B cell (primary cell): ENCODE measurements at regions of chr5 and their contacts with region 1.

Region 1: DNA sequence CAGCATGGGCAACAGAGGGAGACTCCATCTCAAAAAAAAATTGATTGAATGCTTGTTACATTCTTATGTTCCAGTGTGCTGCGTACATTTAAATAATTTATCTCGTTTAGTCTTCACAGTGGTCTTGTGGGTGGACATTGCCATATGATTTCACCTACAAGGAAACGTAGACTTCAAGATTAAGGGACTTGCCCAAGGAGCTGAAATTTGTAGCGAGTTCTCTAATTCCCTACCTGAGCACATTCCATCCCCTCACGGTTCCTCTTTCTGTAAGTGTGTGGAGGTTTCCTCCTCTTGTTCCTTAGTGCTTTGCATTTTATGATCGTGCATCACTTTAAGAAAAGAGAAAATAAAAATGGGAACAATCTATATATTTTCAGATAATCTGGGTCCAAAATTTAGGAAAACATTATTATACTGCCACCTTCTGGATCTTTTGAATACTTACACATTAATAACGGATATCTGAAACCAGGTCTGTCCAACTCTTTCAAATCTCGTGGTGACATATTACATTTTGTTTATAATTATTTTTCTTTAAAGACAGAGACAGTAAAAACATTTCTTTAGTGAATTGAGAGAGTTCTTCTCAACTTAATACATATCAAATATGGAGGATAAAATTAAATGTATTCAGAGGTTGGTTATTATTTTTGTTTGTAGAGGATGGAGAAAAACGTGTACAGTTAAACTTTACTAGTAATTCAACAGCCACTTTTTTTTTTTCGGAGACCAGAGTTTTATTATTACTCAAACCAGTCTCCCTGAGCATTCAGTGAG is 29.9 kb upstream of the C7 start:
- DNase-seq: peak; percentile 36
- ATAC-seq: peak; percentile 36
- H3K4me3 ChIP-seq: no peak overlapping the region
- H3K4me3 Mint-ChIP-seq: no peak overlapping the region
- H3K27ac ChIP-seq: no peak overlapping the region
- H3K27ac Mint-ChIP-seq: no peak overlapping the region
- H3K4me1 ChIP-seq: no peaks in the 10 kb centered on the region
- H3K4me1 Mint-ChIP-seq: no peaks in the 10 kb centered on the region
- H3K27me3 ChIP-seq: peaks cover 0 to 5% (median 0%) of the 10 kb centered on the region in 4 experiments
- H3K27me3 Mint-ChIP-seq: peaks cover 20% of the 10 kb centered on the region
- CTCF ChIP-seq: peak; percentile 83

Region 2: GRCh38 chr5:39578887-39579497 is 1300.4 kb before region 1 on chr5:
- CTCF ChIA-PET with region 1: interaction called, 6 read pairs
- POLR2A ChIA-PET with region 1: no interaction called
- intact Hi-C with region 1: loop called (anchors 1 kb)
- DNase-seq: peak; percentile 38
- ATAC-seq: no peak
- H3K4me3 ChIP-seq: no peak overlapping the region
- H3K4me3 Mint-ChIP-seq: no peak overlapping the region
- H3K27ac ChIP-seq: no peak overlapping the region
- H3K27ac Mint-ChIP-seq: no peak overlapping the region
- H3K4me1 ChIP-seq: peaks cover 7 to 11% of the 10 kb centered on the region in 2 donors
- H3K4me1 Mint-ChIP-seq: peaks cover 5% of the 10 kb centered on the region
- H3K27me3 ChIP-seq: no peaks in the 10 kb centered on the region
- H3K27me3 Mint-ChIP-seq: peaks cover 14% of the 10 kb centered on the region
- CTCF ChIP-seq: peak; percentile 95

Region 3: DNA sequence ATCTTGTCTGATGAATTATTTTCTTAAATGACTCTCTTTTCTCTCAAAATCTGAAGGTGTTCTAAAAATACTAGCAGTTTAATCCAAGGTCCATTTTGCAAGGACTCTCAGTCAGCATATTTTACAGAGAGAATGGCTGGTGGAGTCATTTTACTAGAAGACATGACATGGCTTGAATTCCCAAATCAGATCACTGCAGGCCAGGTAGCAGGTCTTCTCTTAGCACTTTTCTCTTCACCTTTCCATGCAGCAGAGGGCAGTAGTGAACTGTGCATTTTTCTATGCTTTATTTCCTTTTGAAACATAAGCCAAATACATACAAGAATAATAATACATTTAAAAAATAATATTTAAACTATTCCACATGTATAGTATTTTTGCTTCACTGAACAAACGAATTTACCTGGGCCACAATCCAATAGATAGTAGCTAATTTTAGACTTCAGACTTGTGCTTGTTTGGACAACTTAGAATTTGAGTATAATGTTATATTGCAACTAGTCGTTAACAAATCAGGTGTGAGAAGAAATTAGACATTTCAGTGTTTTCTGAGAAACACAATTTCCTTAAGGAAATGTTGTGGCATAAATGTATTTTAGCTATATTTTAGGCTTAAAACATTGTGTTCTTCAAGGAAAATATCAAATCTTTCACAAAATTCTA is 1165.2 kb before region 1 on chr5:
- CTCF ChIA-PET with region 1: interaction called, 13 read pairs
- POLR2A ChIA-PET with region 1: no interaction called
- intact Hi-C with region 1: no loop called
- DNase-seq: peak; percentile 55
- ATAC-seq: no peak
- H3K4me3 ChIP-seq: no peak overlapping the region
- H3K4me3 Mint-ChIP-seq: no peak overlapping the region
- H3K27ac ChIP-seq: no peak overlapping the region
- H3K27ac Mint-ChIP-seq: no peak overlapping the region
- H3K4me1 ChIP-seq: no peaks in the 10 kb centered on the region
- H3K4me1 Mint-ChIP-seq: no peaks in the 10 kb centered on the region
- H3K27me3 ChIP-seq: peaks cover 0 to 3% (median 0%) of the 10 kb centered on the region in 4 experiments
- H3K27me3 Mint-ChIP-seq: no peaks in the 10 kb centered on the region
- CTCF ChIP-seq: peak; percentile 73